ENCODE measurements at regions of chr15 and their contacts with region 1.

Region 1: DNA sequence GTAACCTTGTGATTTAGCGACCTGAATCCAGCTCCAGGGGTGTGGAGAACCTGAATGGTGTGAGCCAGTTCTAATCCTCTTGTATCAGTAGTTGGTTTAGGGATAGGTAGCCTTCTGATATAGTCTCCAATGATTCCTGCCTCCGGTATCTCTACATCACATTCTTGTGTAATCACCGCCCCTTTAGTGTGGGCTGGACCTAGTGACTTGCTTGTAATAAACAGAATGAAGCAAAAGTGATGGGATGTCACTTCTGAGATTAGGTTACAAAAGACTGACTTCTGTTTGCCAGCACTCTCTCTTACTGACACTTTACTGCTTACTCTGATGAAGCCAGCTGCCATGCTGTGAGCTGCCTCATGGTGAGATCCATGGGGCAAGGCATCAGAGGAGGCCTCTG is 36.7 kb downstream of the TM6SF1 start:
- DNase-seq: no peak
- ATAC-seq: no peak

Region 2: GRCh38 chr15:83166218-83166617 is 22.0 kb after region 1 on chr15:
- intact Hi-C with region 1: loop called (anchors 2 kb)
- DNase-seq: no peak
- ATAC-seq: no peak

Measured in sciatic nerve (tissue), 2 donors.